ENCODE measurements at regions of chr17 and their contacts with region 1.

Region 1: DNA sequence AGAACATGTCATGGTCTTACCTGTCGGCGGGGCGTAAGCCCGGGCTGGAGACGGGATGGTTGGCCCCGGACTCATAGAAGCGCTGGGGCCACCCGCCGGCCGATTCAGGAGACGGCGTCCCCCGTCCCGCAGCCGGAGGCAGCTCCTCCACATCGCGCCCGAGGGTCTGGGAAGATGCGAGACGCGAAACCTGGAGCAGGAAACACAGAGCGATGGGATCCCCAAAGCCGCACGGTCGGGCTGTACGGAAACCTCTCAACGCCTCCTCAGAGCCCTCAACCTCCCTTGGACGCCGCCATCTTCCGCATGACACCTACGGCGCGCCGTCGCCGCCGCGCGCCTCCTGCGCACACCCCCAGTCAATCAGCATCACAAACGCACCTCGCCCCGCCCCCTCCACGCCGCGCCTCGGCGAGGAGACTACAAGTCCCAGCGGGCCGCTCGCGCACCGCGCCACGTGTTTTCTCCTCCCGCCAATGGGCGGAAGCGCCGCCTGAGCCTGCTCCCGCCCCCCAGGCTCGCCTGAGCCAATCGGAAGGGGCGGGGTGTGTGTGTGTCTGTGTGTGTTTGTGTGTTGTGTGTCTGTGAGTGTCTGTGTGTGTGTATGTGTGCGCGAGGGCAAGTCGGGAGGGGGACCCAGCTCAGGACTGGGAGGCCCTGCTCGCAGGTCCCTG is at the starts of genes ATPAF2 and GID4:
- DNase-seq: peak; percentile 96 to 100
- H3K4me3 ChIP-seq: peak within 1 kb of the TSS; percentile 78
- H3K4me1 ChIP-seq: peaks cover 15% of the 10 kb centered on the region
- H3K27me3 ChIP-seq: no peaks in the 10 kb centered on the region

Region 2: GRCh38 chr17:17675925-17676534 is 363.0 kb before region 1 on chr17:
- in situ Hi-C with region 1: loop called (anchors 10 kb)
- DNase-seq: no peak
- H3K4me3 ChIP-seq: no peak overlapping the region
- H3K4me1 ChIP-seq: peaks cover 8% of the 10 kb centered on the region
- H3K27me3 ChIP-seq: no peaks in the 10 kb centered on the region

Region 3: DNA sequence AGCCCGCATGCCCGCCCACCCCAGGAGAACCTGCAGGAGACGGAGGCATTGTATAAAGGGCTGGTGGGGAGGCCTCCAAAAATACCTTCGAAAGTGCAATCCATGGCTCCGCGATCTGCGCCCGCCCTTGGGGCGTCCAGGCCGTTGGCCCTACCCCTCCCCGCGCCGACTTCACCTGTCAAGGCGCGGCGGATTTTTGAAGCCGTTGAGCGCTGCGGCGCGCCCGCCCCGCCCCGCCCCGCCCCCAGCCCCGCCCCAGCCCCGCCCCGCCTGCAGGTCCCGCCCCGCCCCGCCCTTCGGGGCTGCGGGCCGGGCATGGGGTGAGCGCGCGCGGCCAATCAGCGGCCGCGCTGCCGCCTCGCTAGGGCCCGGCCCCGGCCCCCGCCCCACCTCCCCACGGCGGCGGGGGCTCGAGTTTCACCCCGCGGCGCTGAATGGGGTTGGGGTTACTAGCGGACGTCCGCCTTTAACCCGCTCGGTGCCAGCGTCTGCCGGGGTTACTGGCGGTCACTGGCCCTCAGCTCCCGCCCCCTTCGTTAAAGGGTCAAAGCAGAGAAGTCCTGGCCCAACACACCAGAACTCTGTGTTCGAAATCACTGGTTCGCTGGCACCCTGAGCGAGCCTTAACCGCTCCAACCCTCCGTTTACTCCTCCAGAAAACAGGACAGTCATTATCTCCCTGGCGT is 215.4 kb before region 1 on chr17:
- in situ Hi-C with region 1: loop called (anchors 10 kb)
- DNase-seq: peak; percentile 89 to 94
- H3K4me3 ChIP-seq: peak overlapping the region; percentile 31
- H3K4me1 ChIP-seq: peaks cover 23% of the 10 kb centered on the region
- H3K27me3 ChIP-seq: no peaks in the 10 kb centered on the region

Measured in HAP-1 (cell line).